Calu3 (cell line): ENCODE measurements at regions of chr3 and their contacts with region 1.

Region 1: GRCh38 chr3:146160964-146161662 is at the start of gene PLOD2:
- DNase-seq: peak; percentile 93
- H3K4me3 Mint-ChIP-seq: peak within 1 kb of the TSS; percentile 66
- H3K27ac Mint-ChIP-seq: peak within 1 kb of the TSS; percentile 97
- H3K4me1 Mint-ChIP-seq: peaks cover 40% of the 10 kb centered on the region
- H3K27me3 Mint-ChIP-seq: no peaks in the 10 kb centered on the region
- CTCF ChIP-seq: no peak
- total RNA-seq, gene PLOD2: 84.0 and 123 TPM in 2 replicates

Region 2: GRCh38 chr3:145182196-145182911 is 978.8 kb before region 1 on chr3:
- CTCF ChIA-PET with region 1: no interaction called
- intact Hi-C with region 1: loop called (anchors 10 kb)
- DNase-seq: no peak
- H3K4me3 Mint-ChIP-seq: no peak overlapping the region
- H3K27ac Mint-ChIP-seq: no peak overlapping the region
- H3K4me1 Mint-ChIP-seq: peaks cover 16% of the 10 kb centered on the region
- H3K27me3 Mint-ChIP-seq: no peaks in the 10 kb centered on the region
- CTCF ChIP-seq: no peak

Region 3: GRCh38 chr3:146065573-146066006 is 95.5 kb before region 1 on chr3:
- CTCF ChIA-PET with region 1: interaction called, 28 read pairs
- intact Hi-C with region 1: loop called (anchors 1 kb)
- DNase-seq: peak; percentile 62
- H3K4me3 Mint-ChIP-seq: no peak overlapping the region
- H3K27ac Mint-ChIP-seq: no peak overlapping the region
- H3K4me1 Mint-ChIP-seq: peaks cover 8% of the 10 kb centered on the region
- H3K27me3 Mint-ChIP-seq: no peaks in the 10 kb centered on the region
- CTCF ChIP-seq: peak; percentile 74

Region 4: GRCh38 chr3:146184616-146185015 is 23.5 kb after region 1 on chr3:
- CTCF ChIA-PET with region 1: interaction called, 14 read pairs
- intact Hi-C with region 1: loop called (anchors 1 kb)
- DNase-seq: peak; percentile 81
- H3K4me3 Mint-ChIP-seq: no peak overlapping the region
- H3K27ac Mint-ChIP-seq: no peak overlapping the region
- H3K4me1 Mint-ChIP-seq: peaks cover 17% of the 10 kb centered on the region
- H3K27me3 Mint-ChIP-seq: no peaks in the 10 kb centered on the region
- CTCF ChIP-seq: no peak

Region 5: GRCh38 chr3:146544002-146544928 is 383.2 kb after region 1 on chr3 and contains the start of gene PLSCR1:
- CTCF ChIA-PET with region 1: no interaction called
- intact Hi-C with region 1: loop called (anchors 2 kb)
- DNase-seq: peak; percentile 99
- H3K4me3 Mint-ChIP-seq: peak within 1 kb of the TSS; percentile 87
- H3K27ac Mint-ChIP-seq: peak within 1 kb of the TSS; percentile 91
- H3K4me1 Mint-ChIP-seq: peaks cover 51% of the 10 kb centered on the region
- H3K27me3 Mint-ChIP-seq: no peaks in the 10 kb centered on the region
- CTCF ChIP-seq: no peak
- total RNA-seq, gene PLSCR1: 887 and 1,018 TPM in 2 replicates

Region 6: GRCh38 chr3:146621723-146622122 is 460.6 kb after region 1 on chr3:
- CTCF ChIA-PET with region 1: no interaction called
- intact Hi-C with region 1: no loop called
- DNase-seq: no peak
- H3K4me3 Mint-ChIP-seq: no peak overlapping the region
- H3K27ac Mint-ChIP-seq: no peak overlapping the region
- H3K4me1 Mint-ChIP-seq: peaks cover 10% of the 10 kb centered on the region
- H3K27me3 Mint-ChIP-seq: no peaks in the 10 kb centered on the region
- CTCF ChIP-seq: no peak